ENCODE measurements at regions of chr5 and their contacts with region 1.

Region 1: DNA sequence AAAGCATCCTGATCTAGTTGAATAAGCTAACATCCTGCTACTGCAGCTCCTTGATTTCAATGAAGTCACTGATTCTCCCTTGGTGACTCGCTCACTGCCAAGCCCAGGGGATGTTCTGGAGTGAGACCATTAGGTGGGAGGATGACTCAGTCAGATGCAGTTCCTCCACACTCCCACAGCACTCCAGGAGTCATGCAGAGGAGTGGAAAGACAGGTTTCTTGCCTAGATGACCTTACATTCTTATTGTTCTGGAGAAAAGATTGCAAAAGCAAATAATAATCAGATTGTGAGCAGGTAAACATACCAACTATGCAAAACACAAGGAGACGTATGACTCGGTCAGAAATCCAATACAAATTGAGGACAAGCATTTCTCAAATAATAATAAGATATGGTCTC is 15.2 kb downstream of the GCNT4 start:
- DNase-seq: no peak
- ATAC-seq: no peak
- H3K4me3 Mint-ChIP-seq: peak overlapping the region in 2 of 10 donors; percentile 3 to 54
- H3K27ac Mint-ChIP-seq: peak overlapping the region; percentile 43 to 94 (median 85)
- H3K4me1 Mint-ChIP-seq: peaks cover 36 to 85% (median 72%) of the 10 kb centered on the region in 4 donors
- H3K27me3 Mint-ChIP-seq: no peaks in the 10 kb centered on the region

Region 2: DNA sequence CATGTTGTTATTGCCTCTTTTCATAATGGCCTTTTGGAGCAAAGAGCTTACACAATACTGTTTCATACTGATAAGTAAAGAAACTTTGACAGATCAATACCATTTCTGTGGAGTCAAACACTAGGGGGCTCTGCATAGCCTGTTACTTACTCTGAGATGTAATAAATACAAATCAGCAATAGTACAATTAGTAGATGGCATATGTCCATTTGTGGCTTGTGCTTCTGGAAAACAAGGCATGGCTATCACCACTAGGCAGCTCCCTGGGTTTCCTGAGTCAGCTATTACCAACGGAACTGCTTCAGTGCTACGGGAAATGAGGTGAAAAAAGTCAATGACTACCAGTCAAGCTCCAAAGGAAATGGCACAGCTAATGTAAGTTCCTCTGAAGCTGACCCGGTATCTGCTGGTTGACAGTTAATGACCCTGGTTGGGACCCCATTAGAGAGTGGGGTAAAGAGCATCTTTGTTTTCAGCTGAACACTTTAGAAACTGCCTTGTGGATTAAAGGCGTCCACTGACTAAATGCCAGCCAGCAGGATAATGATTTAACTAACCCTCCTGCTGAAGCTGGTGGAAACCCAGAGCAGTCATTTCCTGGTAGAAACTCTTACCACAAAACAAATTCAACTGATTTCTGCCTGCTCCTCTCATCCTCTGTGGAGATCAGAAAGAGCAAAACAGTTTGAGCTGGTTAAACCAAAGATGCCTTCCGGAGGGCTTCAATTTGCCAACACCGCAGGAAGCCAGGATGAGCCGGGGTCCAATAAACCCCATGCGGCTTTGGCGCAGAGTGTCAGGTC is 102.0 kb before region 1 on chr5:
- POLR2A ChIA-PET with region 1: interaction called, 10 read pairs
- DNase-seq: peak in 7 of 10 donors; percentile 2 to 60 (median 18)
- ATAC-seq: peak; percentile 87 to 88
- H3K4me3 Mint-ChIP-seq: peak overlapping the region; percentile 63 to 80 (median 74)
- H3K27ac Mint-ChIP-seq: peak overlapping the region; percentile 28 to 91 (median 80)
- H3K4me1 Mint-ChIP-seq: peaks cover 16 to 34% (median 30%) of the 10 kb centered on the region in 4 donors
- H3K27me3 Mint-ChIP-seq: peaks cover 0 to 12% (median 0%) of the 10 kb centered on the region in 5 donors

Region 3: DNA sequence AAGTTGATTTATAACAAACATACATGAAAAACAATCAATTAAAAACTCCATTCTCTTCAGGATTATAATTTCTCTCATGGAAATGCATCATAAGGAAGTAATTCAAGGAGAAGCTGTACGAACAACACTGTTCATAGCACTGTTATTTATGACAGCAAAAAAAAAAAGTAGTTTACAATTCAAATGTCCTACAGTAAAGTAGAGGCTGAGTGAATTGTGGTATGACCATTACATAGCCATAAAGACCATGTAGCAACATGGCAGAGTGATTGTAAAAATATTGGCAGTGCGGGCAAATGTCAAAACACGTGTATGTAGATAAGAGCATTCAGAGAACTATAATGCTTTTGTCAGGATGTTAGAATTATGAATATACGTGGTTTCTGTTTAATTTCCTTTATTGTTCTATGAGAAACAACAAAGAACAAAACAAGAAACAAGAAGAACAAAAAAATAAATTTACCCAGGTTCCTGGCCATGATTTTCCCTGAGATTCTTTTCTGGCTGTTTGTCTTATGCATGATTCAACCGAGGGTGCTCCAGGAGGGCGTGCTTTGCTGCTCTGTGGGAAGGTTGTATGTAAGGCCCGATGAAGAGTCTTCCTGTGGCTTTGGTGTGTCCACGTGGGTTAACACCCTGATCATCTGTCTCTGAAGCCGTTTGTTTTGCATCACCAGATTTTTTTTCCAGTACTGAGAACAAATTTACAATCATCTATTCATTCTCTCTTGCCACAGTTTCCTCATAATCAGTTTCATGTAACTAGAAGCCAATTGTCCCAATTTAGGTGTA is 13.6 kb before region 1 on chr5:
- POLR2A ChIA-PET with region 1: interaction called, 19 read pairs
- DNase-seq: peak in 9 of 10 donors; percentile 9 to 72 (median 25)
- ATAC-seq: peak; percentile 77 to 79
- H3K4me3 Mint-ChIP-seq: peak overlapping the region; percentile 19 to 82 (median 70)
- H3K27ac Mint-ChIP-seq: peak overlapping the region; percentile 35 to 93 (median 86)
- H3K4me1 Mint-ChIP-seq: peaks cover 22 to 66% (median 47%) of the 10 kb centered on the region in 4 donors
- H3K27me3 Mint-ChIP-seq: no peaks in the 10 kb centered on the region

Region 4: DNA sequence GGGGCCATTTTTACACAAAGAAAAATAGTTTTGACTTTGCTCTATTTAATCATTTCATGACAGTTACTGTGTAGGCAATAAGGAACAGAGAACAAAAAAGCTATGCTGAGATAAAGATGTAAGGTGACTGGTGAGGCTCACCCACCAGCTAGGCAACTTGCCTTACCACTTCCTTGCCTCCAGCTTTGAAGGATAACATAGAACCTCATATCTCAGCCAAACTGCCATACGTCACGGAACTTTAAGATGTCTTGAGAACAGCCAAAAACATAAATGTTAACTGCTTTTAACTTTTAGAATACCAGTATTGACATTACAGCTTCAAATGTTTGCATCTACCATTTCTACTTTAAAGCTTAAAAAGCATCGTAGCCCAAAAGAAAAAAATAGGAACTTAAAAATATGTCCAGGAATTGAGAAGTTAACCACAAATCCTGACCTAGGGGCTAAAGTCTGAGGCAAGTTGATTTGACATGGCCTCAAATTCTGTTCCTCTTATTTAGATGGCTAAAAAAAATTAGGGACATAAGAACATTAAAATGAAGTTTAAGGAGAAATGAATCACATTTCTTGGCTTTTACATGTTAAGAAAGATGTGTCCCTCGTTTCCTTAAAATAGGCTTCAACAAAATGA is 22.9 kb after region 1 on chr5:
- POLR2A ChIA-PET with region 1: interaction called, 15 read pairs
- DNase-seq: peak; percentile 30 to 94 (median 74)
- ATAC-seq: peak; percentile 88 to 97
- H3K4me3 Mint-ChIP-seq: peak overlapping the region; percentile 34 to 82 (median 69)
- H3K27ac Mint-ChIP-seq: peak overlapping the region; percentile 94 to 98 (median 98)
- H3K4me1 Mint-ChIP-seq: peaks cover 38 to 87% (median 81%) of the 10 kb centered on the region in 4 donors
- H3K27me3 Mint-ChIP-seq: peaks cover 0 to 5% (median 0%) of the 10 kb centered on the region in 5 donors